Common myeloid progenitor, CD34-positive (primary cell): ENCODE measurements at regions of chr20 and their contacts with region 1.

Region 1: GRCh38 chr20:36199345-36200257 is 36.7 kb upstream of the AAR2 start:
- DNase-seq: peak; percentile 67 to 82 (median 73)
- H3K4me3 ChIP-seq: no peak overlapping the region
- H3K27ac ChIP-seq: no peak overlapping the region
- H3K4me1 ChIP-seq: peaks cover 0 to 6% (median 2%) of the 10 kb centered on the region in 4 experiments
- H3K27me3 ChIP-seq: peaks cover 0 to 16% (median 0%) of the 10 kb centered on the region in 5 experiments

Region 2: DNA sequence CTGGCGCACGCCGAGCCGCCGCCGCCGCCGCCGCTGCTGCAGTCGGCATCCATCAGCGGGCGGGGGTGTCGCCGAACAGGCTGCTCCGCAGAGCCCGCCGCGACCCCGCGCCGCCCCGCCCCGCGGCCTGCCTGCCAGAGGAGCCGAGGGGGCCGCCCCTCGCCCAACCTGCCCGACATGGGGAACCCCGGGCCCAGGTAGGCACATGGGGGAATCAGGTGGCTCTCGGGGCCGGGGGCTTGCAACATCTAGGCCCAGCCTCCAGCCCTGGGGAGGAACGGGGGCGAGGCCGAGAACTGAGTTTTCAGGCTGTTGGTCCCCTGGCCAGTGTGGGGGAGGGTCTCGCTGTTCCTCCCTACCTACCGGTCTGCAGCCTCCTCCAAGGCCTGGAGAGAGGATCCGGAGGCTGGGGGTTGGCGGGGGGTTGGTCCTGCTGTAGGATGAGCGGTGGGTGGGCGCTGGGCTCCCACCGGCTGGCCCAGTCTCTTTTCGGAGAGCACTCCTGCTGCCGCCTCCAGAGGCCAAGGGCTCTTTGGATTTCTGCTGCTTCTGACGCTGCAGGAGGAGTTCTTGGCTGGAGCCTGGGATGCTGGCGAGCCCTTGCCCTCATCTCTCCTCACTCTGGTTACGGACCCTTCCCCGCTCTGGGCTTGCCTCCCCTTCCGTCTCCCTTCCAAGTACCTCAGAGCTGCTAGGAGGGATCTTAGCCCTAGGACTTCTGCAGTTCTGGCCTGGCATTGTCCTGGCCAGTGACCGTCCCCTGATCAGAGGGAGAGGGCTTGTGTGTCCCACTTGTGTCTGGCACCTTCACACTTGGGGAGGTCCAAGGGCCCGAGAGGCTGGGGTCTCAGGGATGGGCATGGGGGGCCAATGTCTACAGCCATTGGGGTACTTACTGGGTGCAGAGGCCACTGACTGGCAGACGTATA is 44.6 kb before region 1 on chr20 and contains the start of gene EPB41L1:
- CTCF ChIA-PET with region 1: interaction called, 25 read pairs
- POLR2A ChIA-PET with region 1: interaction called, 3 read pairs
- DNase-seq: no peak
- H3K4me3 ChIP-seq: peak within 1 kb of the TSS; percentile 24 to 74 (median 49)
- H3K27ac ChIP-seq: no peak within 1 kb of the TSS
- H3K4me1 ChIP-seq: peaks cover 0 to 20% (median 10%) of the 10 kb centered on the region in 4 experiments
- H3K27me3 ChIP-seq: peaks cover 0 to 20% (median 7%) of the 10 kb centered on the region in 5 experiments

Region 3: GRCh38 chr20:36214684-36215256 is 15.2 kb after region 1 on chr20:
- CTCF ChIA-PET with region 1: interaction called, 26 read pairs
- POLR2A ChIA-PET with region 1: no interaction called
- DNase-seq: peak; percentile 41 to 56 (median 55)
- H3K4me3 ChIP-seq: no peak overlapping the region
- H3K27ac ChIP-seq: no peak overlapping the region
- H3K4me1 ChIP-seq: peaks cover 0 to 6% (median 0%) of the 10 kb centered on the region in 4 experiments
- H3K27me3 ChIP-seq: no peaks in the 10 kb centered on the region

Region 4: GRCh38 chr20:36439040-36439730 is 239.6 kb after region 1 on chr20:
- CTCF ChIA-PET with region 1: interaction called, 23 read pairs
- POLR2A ChIA-PET with region 1: no interaction called
- DNase-seq: peak; percentile 53 to 66 (median 55)
- H3K4me3 ChIP-seq: no peak overlapping the region
- H3K27ac ChIP-seq: no peak overlapping the region
- H3K4me1 ChIP-seq: peaks cover 0 to 5% (median 1%) of the 10 kb centered on the region in 4 experiments
- H3K27me3 ChIP-seq: peaks cover 0 to 16% (median 0%) of the 10 kb centered on the region in 5 experiments